ENCODE measurements at regions of chrX and their contacts with region 1.

Region 1: DNA sequence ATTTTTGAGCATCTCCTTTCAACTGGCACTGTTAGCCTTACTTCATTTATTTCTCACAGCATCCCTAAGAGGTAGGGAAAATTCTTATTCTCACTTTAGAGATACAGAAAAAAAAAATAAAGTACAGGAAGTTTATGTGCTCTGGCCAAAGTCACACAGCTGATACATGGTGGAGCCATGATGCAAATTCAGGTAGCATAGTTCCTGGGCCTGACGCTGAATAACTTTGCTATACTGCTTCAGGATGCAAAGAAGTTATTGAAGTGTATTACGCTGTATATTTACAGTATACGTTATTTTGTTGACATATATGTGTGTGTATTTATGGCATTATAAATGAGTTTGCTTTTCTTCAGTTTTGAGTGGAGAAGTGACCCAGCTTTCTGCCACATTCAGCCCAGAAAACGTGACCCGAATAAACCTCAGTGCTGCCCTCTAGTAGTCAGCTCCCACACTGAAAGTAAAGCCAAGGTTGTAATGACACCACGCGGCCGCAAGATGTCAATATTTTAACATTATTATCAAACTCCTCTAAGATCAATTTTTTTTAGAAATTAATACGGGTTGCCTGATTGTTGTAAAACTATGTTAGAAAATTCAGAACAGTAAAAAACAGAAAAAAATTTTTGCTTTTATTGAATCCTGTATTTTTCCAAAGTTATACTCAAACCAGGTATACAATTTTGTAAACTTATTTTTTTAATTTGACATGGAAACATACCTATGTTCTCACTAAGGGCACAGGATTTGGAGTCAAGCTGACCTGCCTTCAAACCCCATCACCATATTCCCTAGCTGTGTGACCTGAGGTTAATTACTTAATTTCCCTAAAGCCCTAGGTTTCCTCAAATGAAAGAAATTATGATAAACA is 3.8 kb upstream of the GUCY2F start:
- DNase-seq: peak; percentile 73
- ATAC-seq: no peak

Region 2: DNA sequence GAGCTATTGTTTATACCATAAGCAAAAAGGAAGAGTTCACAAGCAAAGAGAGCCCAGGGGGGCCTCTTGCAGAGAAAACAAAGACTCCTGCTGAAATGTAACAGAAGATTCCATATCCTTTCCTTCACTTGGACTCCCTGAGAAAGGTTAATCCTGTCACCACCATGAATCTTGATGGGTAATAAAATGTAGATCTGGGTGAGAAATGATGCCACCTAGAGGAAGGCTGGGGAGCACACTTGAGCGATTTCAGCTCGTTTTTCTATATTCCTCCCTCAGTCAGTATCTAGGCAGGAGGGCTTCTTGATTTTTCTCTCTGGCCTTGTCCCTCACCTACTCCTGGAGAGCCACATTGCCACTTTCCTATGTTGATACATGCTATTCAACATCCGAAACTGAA is 149.5 kb after region 1 on chrX:
- intact Hi-C with region 1: loop called (anchors 2 kb)
- DNase-seq: no peak
- ATAC-seq: no peak

Region 3: GRCh38 chrX:109886122-109886761 is 400.5 kb after region 1 on chrX:
- intact Hi-C with region 1: loop called (anchors 10 kb)
- DNase-seq: no peak
- ATAC-seq: no peak

Region 4: GRCh38 chrX:110699109-110699508 is 1213.4 kb after region 1 on chrX:
- intact Hi-C with region 1: no loop called
- DNase-seq: no peak
- ATAC-seq: no peak

Measured in Right ventricle myocardium inferior (tissue), 1 donor.